Heart right ventricle (tissue), 16 donors: ENCODE measurements at regions of chr5 and their contacts with region 1.

Region 1: DNA sequence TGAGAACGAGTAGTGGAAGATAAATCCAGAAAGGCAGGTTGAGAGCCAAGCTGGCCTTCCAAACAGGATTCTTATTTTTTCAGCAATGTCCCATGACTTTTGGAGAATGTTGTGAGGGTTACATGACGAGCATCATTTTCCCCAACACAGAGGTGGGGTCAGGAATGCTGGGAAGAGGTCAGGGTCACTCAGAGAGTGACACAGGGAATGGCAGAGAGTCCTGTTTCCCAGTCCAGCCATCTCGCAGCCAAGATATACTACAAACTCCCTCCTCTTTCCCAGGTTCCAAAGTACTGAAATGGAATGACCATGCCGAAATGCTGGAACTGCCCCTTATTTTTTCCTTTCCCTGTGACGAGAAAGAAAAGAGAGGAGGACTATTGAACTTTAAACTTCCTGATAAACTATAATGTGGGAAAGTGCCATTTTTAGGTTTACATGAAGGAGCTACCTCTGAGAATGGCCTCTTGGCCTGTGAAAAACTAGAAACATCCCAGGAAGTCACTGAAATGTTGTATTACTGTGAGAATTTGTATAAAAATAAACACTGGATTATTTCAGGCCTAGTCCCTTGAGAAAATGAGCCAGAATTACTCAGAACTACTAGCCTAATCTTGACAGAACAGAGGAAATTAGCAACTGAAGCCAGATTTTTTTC is 420.4 kb downstream of the CETN3 start:
- DNase-seq: peak; percentile 14 to 79
- ATAC-seq: peak; percentile 80 to 92 (median 88)
- H3K4me3 ChIP-seq: no peak overlapping the region
- H3K27ac ChIP-seq: peak overlapping the region; percentile 10 to 88 (median 72)
- H3K4me1 ChIP-seq: peaks cover 3 to 40% (median 19%) of the 10 kb centered on the region in 9 donors
- H3K27me3 ChIP-seq: no peaks in the 10 kb centered on the region
- CTCF ChIP-seq: no peak

Region 2: DNA sequence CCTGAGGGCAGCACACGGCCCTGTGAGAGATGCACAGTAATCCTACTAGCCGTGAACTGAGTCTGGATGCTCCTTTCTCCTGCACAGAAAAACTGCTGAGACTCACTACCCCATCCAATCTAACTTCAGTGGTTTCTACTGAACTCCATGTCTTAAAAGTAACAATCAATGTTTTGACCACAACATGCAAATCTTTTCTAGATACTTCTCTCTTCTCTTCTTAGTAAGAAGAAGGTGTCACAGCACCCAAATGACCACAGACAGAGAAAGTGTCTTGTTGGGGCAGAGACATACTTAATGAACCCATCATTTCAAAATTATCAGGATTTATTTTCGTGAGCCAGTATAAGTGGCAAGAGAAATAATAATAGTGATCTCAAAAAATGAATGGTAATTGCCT is 820.4 kb before region 1 on chr5:
- intact Hi-C with region 1: no loop called
- DNase-seq: no peak
- ATAC-seq: no peak
- H3K4me3 ChIP-seq: no peak overlapping the region
- H3K27ac ChIP-seq: no peak overlapping the region
- H3K4me1 ChIP-seq: no peaks in the 10 kb centered on the region
- H3K27me3 ChIP-seq: no peaks in the 10 kb centered on the region
- CTCF ChIP-seq: no peak

Region 3: GRCh38 chr5:89901983-89902382 is 87.1 kb before region 1 on chr5:
- intact Hi-C with region 1: no loop called
- DNase-seq: peak in 1 of 2 donors; percentile 63
- ATAC-seq: peak; percentile 89 to 98 (median 94)
- H3K4me3 ChIP-seq: no peak overlapping the region
- H3K27ac ChIP-seq: peak overlapping the region in 6 of 10 donors; percentile 9 to 63 (median 22)
- H3K4me1 ChIP-seq: peaks cover 0 to 14% (median 0%) of the 10 kb centered on the region in 9 donors
- H3K27me3 ChIP-seq: no peaks in the 10 kb centered on the region
- CTCF ChIP-seq: no peak

Region 4: DNA sequence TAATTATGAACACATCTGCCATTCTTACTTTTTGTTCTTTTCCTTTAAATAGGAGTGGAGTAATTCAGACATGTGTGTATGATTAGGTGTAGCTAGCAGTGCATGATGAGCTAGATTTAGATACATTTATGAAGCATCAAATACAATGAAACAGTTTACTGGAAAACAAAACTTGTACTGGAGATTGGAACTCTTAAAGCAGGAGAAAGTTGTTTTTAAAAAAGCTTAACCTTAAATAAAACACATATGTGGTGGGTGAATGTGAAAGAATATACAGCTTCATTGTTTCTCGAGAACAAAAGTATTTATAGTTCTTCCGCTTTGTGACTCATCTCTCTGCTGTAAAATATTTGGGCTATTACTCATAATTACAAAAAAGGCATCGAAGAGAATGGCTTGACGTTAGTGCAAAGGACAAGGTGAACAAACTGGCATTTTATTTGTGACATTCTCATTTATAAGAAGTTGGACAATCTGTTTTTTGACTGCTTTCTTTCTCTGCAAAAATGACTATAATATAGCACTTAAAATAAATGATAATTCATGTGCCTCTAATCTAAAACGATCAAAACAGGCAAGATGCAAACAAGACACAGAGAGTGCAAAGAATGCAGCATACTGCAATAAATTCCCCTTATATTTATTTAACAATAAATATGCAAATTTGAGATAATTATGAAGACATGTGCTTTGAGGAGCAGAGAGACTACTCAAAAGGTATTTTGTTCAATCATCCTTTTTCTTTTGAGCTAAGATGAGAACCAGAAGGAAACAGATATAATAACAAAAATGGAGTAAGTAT is 58.3 kb before region 1 on chr5:
- intact Hi-C with region 1: loop called in 4 of 10 experiments (anchors 5 to 10 kb)
- DNase-seq: no peak
- ATAC-seq: peak in 6 of 8 donors; percentile 59 to 88 (median 78)
- H3K4me3 ChIP-seq: no peak overlapping the region
- H3K27ac ChIP-seq: peak overlapping the region in 8 of 10 donors; percentile 25 to 62 (median 43)
- H3K4me1 ChIP-seq: peaks cover 0 to 49% (median 29%) of the 10 kb centered on the region in 9 donors
- H3K27me3 ChIP-seq: no peaks in the 10 kb centered on the region
- CTCF ChIP-seq: no peak

Region 5: DNA sequence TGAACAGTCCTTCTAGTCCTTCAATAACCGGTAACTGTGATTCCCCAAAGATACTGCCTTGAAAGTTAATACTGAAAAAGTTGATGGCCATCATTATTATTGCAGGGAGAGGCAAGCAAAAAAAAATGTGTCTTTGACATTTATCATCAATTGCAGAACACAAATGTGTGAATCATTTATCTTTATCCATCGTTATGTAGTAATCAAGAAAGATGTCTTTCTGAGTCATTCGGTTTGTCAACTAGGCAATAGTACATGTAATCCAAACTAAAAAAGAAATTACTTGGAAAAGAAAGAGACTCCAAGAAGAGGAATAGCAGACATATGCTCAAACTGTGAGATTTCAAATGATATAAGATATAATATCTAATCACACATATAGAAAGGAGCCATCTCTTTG is 52.6 kb before region 1 on chr5:
- intact Hi-C with region 1: loop called in 4 of 10 experiments (anchors 5 to 10 kb)
- DNase-seq: no peak
- ATAC-seq: no peak
- H3K4me3 ChIP-seq: no peak overlapping the region
- H3K27ac ChIP-seq: no peak overlapping the region
- H3K4me1 ChIP-seq: peaks cover 0 to 32% (median 20%) of the 10 kb centered on the region in 9 donors
- H3K27me3 ChIP-seq: no peaks in the 10 kb centered on the region
- CTCF ChIP-seq: no peak

Region 6: GRCh38 chr5:90171466-90171865 is 182.3 kb after region 1 on chr5:
- intact Hi-C with region 1: no loop called
- DNase-seq: no peak
- ATAC-seq: no peak
- H3K4me3 ChIP-seq: no peak overlapping the region
- H3K27ac ChIP-seq: no peak overlapping the region
- H3K4me1 ChIP-seq: peaks cover 3 to 33% (median 12%) of the 10 kb centered on the region in 9 donors
- H3K27me3 ChIP-seq: no peaks in the 10 kb centered on the region
- CTCF ChIP-seq: no peak